MCF 10A (cell line): ENCODE measurements at regions of chr1 and their contacts with region 1.

Region 1: DNA sequence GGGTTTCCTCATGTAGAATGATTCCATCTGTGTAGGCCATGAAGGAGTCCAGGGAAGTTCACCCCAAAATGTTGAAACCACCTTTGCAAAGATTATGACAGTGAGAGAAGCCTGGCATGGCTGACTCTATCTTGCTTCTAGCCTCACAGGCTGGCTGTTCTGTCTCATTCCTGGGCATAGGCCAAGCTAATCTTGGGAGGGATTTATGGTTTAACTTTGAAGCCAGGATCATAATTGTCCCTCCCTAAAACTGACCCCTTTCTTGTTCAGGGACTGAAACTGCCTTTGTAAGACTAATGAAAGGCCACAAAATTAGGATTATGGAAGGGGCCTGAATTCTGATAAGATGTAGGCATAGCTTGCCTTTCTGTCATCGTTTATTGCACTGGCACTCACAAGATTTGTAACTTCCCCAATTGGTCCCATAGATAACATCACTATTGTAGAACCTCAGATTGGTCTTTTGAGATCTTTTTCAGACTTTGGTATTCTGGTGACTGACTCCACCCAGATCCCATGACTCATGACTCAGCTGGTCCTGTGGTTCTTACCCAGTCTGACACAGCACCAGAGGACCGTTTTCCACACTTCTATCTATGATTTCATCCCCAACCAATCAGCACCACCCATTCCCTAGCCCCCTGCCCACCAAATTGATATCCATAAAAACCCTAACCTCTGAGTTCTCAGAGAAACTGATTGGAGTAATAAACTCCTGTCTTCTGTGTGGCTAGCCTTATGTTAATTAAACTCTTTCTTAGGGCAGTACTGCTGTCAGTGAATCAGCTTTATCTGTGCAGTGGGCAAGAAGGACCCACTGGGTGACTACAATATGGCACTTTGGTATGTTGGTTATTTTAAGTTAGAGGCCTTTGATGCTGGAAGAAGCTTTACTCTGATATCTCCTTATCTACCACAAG is 13.6 kb upstream of the LAMTOR5 start:
- DNase-seq: peak; percentile 27
- H3K4me3 Mint-ChIP-seq: no peak overlapping the region
- H3K27ac Mint-ChIP-seq: peak overlapping the region; percentile 63
- H3K4me1 Mint-ChIP-seq: peaks cover 22% of the 10 kb centered on the region
- H3K27me3 Mint-ChIP-seq: no peaks in the 10 kb centered on the region
- CTCF ChIP-seq: no peak

Region 2: GRCh38 chr1:110433803-110434202 is 12.7 kb after region 1 on chr1:
- CTCF ChIA-PET with region 1: interaction called, 32 read pairs
- POLR2A ChIA-PET with region 1: interaction called, 28 read pairs
- intact Hi-C with region 1: no loop called
- DNase-seq: peak; percentile 86
- H3K4me3 Mint-ChIP-seq: no peak overlapping the region
- H3K27ac Mint-ChIP-seq: peak overlapping the region; percentile 80
- H3K4me1 Mint-ChIP-seq: peaks cover 15% of the 10 kb centered on the region
- H3K27me3 Mint-ChIP-seq: peaks cover 26% of the 10 kb centered on the region
- CTCF ChIP-seq: peak; percentile 30

Region 3: GRCh38 chr1:110440877-110441276 is 19.7 kb after region 1 on chr1:
- CTCF ChIA-PET with region 1: interaction called, 32 read pairs
- POLR2A ChIA-PET with region 1: interaction called, 6 read pairs
- intact Hi-C with region 1: no loop called
- DNase-seq: peak; percentile 32
- H3K4me3 Mint-ChIP-seq: no peak overlapping the region
- H3K27ac Mint-ChIP-seq: peak overlapping the region; percentile 65
- H3K4me1 Mint-ChIP-seq: peaks cover 21% of the 10 kb centered on the region
- H3K27me3 Mint-ChIP-seq: peaks cover 11% of the 10 kb centered on the region
- CTCF ChIP-seq: no peak